Right cardiac atrium (tissue), 5 donors: ENCODE measurements at regions of chr11 and their contacts with region 1.

Region 1: DNA sequence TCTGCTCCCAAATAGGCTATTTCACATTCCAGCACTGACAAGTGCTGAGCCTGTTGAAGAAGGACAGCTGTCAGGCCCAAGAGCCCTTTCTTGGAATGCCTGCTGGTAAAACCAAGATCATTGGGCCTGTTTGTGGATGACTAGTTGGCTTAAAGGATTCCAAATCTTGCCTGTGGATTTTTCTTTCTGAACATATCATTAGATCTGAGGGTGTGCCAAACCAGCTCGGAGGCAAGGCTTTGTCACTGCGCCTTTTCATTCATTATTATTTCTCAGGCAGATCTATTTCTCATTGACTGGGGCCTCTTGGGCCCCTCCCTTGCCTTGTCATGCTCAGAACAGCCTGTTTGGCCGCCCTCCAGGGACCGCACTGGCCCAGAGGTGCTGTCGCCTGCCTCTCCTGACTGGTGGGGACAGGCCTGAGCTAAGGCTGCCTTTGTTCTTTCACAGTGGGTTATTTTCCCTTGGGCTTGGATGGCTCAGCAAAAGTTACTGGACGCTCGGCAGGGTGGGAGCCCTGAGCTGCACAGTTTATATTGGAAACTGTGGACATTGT is 222.7 kb upstream of the SESN3 start:
- DNase-seq: peak; percentile 73 to 90 (median 89)
- ATAC-seq: peak; percentile 75 to 81
- H3K4me3 ChIP-seq: no peak overlapping the region
- H3K27ac ChIP-seq: peak overlapping the region; percentile 6
- H3K4me1 ChIP-seq: peaks cover 6% of the 10 kb centered on the region
- H3K27me3 ChIP-seq: no peaks in the 10 kb centered on the region

Region 2: DNA sequence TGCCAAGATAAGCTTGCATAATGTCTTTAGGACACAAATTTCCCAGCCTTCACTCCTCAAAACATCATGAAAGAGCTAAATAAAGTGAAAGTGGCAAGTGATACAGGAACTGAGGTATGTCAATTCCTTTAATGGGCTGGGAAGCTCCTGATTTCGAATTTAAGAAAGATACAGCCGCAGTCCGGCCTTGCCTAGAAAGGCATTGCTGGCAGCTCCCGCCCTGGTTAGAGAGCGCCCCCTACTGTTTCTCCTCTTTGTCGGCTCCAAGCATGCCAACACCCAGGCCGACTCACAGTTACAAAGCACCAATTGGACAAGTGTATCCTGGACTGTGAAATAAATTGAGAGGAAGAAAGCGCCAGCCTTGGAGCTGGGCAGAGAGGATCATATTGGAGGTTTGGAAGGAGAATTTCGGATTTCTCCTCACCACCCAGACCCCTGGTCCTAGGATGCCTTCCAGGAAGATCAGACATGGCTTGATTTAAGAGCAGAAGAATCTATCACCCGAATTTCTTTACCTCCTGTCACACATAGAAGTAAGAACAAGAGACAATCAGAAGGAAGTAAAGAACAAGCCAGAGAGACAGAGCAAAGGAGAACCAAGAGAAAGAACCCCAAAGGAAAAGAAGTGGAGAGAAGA is 251.9 kb after region 1 on chr11:
- intact Hi-C with region 1: loop called in 1 of 4 experiments (anchors 10 kb)
- DNase-seq: peak; percentile 83 to 92 (median 91)
- ATAC-seq: peak; percentile 97 to 98
- H3K4me3 ChIP-seq: no peak overlapping the region
- H3K27ac ChIP-seq: no peak overlapping the region
- H3K4me1 ChIP-seq: peaks cover 2% of the 10 kb centered on the region
- H3K27me3 ChIP-seq: no peaks in the 10 kb centered on the region